Right ventricle myocardium superior (tissue), 1 donor: ENCODE measurements at regions of chr17 and their contacts with region 1.

Region 1: DNA sequence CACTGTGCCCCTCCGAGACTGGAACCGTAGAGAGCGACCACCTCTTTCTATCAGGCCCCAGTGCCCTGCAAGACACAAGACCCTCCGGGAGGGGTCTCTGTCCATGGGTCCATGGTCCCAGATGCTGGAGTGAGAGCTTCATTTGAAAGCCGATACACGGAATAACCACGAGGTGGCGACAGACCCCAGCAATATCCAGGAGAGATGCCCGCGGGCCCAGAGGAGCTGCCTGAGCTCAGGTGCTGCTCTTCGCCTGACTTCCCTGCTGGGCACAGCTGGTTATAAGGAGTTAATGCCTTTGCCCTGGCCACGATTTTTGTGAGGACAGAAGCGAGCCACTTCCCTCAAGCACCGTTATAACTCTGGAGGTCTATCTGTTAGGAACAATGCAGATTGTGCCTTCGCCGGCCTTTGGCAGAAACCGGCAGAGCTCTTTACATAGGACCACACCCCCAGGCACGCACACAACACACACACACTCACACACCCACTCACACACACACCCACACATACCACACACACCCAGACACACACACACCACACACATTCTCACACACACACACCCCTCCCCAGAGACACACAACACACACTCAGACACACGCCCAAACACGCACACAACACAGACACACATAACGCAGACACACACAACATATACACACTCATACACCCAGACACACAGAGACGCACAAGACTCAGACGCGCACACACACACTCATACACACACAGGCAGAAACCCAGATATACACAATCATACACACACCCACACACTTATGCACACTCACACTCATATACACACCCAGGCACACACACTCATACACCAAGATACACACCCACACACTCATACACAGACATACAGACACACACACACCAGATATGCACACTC is 436.4 kb downstream of the SOX9 start:
- DNase-seq: peak; percentile 59
- ATAC-seq: peak; percentile 55

Region 2: DNA sequence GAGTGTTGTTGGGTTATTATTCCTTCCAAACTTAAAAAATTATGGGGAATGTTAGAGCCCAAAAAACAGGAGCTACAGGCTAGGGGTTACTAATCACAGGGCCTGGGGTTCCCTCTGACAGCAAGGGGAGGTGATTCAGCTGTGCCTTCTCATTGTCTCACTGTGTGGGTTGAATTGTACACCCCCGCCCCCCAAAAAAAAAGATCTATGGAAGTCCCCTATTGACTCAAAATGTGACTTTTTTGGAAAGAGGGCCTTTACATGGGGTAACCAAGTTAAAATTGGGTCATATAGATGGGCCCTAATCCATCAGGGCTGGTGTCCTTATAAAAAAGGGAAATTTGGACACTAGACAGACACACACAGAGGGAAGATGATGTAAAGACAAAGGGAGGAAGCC is 246.2 kb before region 1 on chr17:
- intact Hi-C with region 1: no loop called
- DNase-seq: no peak
- ATAC-seq: no peak

Region 3: GRCh38 chr17:72725433-72726068 is 168.4 kb after region 1 on chr17:
- intact Hi-C with region 1: loop called (anchors 10 kb)
- DNase-seq: peak; percentile 60
- ATAC-seq: peak; percentile 88

Region 4: DNA sequence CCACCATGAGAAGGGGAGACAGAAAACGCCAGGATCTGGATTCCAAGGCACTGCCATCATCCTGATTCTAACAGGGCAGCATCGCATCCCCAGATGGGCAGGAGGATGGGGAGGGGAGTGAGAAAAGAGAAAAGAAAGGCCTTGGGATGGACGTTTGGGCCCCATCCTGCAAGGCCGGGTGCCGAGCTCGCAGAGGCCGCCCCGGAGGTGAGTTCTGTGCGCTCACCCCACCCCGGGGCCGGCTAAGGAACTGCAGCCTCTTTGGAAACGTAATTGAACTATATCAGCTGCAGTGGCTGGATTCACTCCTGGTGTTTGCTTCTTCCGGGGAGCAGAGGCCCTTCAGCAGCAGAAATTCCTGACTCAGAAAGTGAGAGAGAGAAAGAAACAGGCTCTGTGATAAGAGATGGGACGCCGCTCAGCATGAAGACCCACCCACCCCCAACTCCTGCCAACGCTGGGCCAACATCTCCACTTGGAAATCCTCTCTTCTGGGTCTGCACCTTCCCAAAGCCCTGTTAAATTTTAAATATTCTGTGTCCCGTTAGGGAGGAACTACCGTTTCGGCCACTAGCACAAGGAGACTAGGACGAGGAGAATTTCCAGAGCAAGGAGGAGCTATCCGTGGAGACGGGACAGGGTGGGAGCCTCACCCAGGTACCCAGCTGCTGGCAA is 599.1 kb after region 1 on chr17:
- intact Hi-C with region 1: loop called (anchors 10 kb)
- DNase-seq: peak; percentile 81
- ATAC-seq: peak; percentile 98